Sciatic nerve (tissue), 2 donors: ENCODE measurements at regions of chr10 and their contacts with region 1.

Region 1: DNA sequence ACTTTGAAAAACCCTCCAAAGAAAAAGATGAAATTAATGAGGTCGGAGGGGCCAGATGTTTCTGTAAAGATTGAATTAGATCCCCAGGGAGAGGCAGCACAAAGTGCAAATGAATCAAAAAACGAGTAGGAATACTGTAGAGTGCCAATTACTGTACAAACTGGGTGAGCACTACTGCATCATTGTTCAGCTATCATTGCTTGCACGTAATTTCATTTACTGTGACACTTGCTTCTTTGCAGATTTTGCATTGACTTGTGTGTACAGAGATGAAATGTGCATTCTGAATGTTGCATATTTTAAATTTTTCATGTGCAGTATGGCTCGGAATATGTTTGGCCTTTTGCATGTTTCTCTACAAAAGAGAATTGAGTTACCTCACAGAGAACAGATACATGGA is 123.7 kb downstream of the LCOR start:
- DNase-seq: no peak
- ATAC-seq: no peak

Region 2: GRCh38 chr10:95706986-95707385 is 1248.8 kb before region 1 on chr10:
- intact Hi-C with region 1: loop called (anchors 5 kb)
- DNase-seq: no peak
- ATAC-seq: no peak